HEK293T (cell line): ENCODE measurements at regions of chr6 and their contacts with region 1.

Region 1: GRCh38 chr6:150891888-150892485 is 26.5 kb downstream of the MTHFD1L start:
- DNase-seq: peak; percentile 74

Region 2: DNA sequence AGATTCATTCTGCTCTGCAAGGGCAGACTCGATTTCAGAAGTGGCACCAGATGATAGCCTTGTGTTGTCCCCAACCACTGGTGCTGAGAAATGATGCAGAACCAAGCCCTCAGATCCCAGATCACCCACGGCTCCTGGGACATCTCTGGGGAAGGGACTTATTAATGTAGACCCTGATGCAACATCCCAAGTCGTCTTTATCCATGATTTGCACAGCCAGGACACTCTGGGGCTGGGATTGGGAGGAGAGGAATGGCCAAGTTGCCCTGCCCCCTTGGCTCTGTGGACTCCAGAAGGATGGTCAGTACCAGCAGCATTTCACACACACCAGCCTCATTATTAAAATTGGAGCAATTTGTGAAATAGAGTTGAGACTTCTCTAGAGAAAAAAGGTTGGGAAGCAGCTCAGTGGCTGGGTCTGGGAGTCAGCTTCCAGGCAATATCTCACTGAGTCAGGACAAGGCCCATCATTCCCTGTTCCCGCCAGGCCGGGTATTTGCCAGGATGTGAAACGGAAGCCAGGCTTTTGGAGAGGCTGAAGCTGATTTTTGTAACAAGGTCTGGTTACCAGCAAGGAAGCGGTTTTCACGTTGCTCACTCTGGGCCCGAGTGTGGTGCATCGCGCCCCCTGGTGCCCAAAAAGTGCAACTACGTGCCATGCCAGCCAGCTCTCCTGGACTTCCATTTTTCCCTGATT is 432.0 kb after region 1 on chr6:
- CTCF ChIA-PET with region 1: interaction called, 14 read pairs
- POLR2A ChIA-PET with region 1: no interaction called
- DNase-seq: peak; percentile 85